ENCODE measurements at regions of chr4 and their contacts with region 1.

Region 1: GRCh38 chr4:157217708-157218107 is 2.8 kb upstream of the GRIA2 start:
- DNase-seq: no peak
- H3K4me3 ChIP-seq: no peak overlapping the region
- H3K27ac ChIP-seq: no peak overlapping the region
- H3K27me3 ChIP-seq: peaks cover 29% of the 10 kb centered on the region
- CTCF ChIP-seq: peak; percentile 61

Region 2: GRCh38 chr4:157023941-157024340 is 193.8 kb before region 1 on chr4:
- CTCF ChIA-PET with region 1: no interaction called
- POLR2A ChIA-PET with region 1: no interaction called
- DNase-seq: no peak
- H3K4me3 ChIP-seq: no peak overlapping the region
- H3K27ac ChIP-seq: no peak overlapping the region
- H3K27me3 ChIP-seq: no peaks in the 10 kb centered on the region
- CTCF ChIP-seq: no peak

Region 3: GRCh38 chr4:157978680-157979361 is 761.1 kb after region 1 on chr4:
- CTCF ChIA-PET with region 1: interaction called, 16 read pairs
- POLR2A ChIA-PET with region 1: no interaction called
- DNase-seq: peak; percentile 33
- H3K4me3 ChIP-seq: peak overlapping the region; percentile 11; the same call in 1 of the 2 replicates
- H3K27ac ChIP-seq: no peak overlapping the region
- H3K27me3 ChIP-seq: no peaks in the 10 kb centered on the region
- CTCF ChIP-seq: peak; percentile 89

Measured in AG04450 (cell line).